ENCODE measurements at regions of chr4 and their contacts with region 1.

Region 1: DNA sequence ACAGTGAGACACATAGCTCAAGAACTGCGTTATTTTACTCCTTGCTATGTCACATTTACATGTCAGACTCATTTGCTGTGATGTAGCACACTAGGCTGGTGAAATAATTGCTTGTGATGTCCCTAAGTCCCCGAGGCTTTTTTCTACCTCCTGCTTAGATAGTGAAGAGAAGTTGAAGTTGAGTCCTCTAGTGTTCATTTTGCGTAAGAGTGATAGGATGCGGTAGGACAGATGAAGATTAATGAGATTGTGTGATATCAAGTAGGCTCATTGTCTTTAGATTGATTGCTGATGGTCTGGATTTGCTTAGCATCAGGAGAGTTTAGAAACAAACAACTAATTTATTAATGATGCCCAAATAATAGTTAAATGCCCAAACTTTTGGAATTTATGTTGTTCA is 173.6 kb upstream of the NUDT6 start:
- DNase-seq: no peak
- H3K4me3 Mint-ChIP-seq: no peak overlapping the region
- H3K27ac Mint-ChIP-seq: no peak overlapping the region
- H3K4me1 Mint-ChIP-seq: no peaks in the 10 kb centered on the region
- H3K27me3 Mint-ChIP-seq: no peaks in the 10 kb centered on the region

Region 2: DNA sequence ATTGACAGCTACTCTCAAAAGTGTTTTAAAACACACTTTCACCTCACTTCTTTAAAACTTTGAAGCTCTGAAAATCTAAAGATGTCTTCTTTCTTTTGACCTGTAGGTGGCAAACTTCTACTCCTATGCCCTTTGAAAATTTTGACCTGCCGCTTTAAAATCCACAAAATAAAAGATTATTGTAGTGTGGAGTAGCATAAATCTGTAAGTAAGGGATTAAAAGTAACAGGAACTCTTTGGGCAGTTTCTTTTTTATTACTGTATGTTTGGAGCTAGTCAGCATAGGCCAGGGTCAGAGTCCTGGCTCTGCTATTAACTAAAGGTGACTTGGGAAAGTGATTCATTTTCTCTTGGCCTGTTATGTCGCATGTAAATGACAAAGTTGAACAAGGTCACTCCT is 338.0 kb before region 1 on chr4:
- intact Hi-C with region 1: loop called (anchors 5 kb)
- DNase-seq: no peak
- H3K4me3 Mint-ChIP-seq: no peak overlapping the region
- H3K27ac Mint-ChIP-seq: no peak overlapping the region
- H3K4me1 Mint-ChIP-seq: peaks cover 15% of the 10 kb centered on the region
- H3K27me3 Mint-ChIP-seq: peaks cover 23% of the 10 kb centered on the region

Region 3: DNA sequence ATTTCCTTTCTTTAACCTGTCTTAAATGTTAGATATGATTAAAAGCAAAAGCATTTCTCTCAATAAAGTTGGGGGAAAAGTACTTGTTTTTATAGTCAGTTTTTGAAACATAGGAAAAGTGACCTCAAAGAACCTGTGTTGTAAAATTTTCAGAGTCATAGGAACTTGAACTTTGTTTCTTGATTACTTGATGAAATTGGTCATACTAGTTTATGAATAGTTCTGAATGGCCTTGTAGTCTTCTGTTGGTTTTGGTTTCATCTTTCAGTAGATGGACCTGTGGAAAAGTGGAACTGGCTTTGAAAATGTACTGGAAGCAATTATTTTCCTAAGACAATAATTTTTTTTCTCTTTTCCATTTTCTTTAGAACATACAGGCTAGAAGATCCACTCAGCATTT is 48.6 kb after region 1 on chr4:
- intact Hi-C with region 1: no loop called
- DNase-seq: no peak
- H3K4me3 Mint-ChIP-seq: no peak overlapping the region
- H3K27ac Mint-ChIP-seq: no peak overlapping the region
- H3K4me1 Mint-ChIP-seq: no peaks in the 10 kb centered on the region
- H3K27me3 Mint-ChIP-seq: no peaks in the 10 kb centered on the region

Measured in activated T-helper 2 cell treated with anti-CD3 and anti-CD28 coated beads, Interferon-gamma antibody, Interleukin-2, Interleukin-4, amounts not matched to agents 10 μg/mL and 5 μg/mL and 100 μg/mL, durations not matched to agents 14 hours and 24 hours and 36 hours (primary cell).